Tibial artery (tissue), 4 donors: ENCODE measurements at regions of chr19 and their contacts with region 1.

Region 1: DNA sequence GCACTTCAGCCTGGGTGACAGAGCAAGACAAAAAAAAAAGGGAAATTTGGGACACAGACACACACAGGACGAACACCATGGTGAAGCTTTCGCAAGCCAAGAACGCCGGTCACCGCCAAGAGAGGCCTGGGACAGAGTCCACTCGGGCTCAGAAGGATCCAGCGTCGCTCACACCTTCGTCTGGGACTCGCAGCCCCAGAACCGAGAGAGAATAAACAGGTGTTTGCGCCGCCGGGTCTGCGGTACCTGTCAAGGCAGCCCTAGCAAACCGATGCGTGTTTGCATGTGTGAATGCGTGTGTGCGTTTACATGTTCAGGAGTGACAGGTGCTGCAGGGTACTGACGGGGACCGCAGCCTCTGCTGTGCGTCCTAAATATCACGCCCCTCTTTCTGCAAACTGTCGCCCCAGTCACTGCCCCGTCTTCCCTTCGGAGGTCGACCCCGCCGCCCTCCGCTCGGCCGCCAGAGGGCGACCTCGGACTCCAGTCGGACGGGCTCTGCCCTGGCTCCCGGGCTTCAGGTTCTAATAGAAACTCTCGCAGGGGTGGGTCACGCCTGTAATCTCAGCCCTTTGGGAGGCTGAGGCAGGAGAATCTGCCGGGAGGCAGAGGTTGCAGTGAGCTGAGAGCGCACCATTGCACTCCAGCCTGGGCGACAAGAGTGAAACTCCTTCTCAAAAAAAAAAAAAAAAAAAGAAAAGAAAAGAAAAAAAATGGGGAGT is 11.8 kb upstream of the CSNK1G2 start:
- DNase-seq: peak; percentile 76 to 83
- H3K4me3 ChIP-seq: peak overlapping the region; percentile 33 to 39
- H3K27ac ChIP-seq: no peak overlapping the region
- H3K4me1 ChIP-seq: peaks cover 0 to 16% (median 11%) of the 10 kb centered on the region in 4 donors
- H3K27me3 ChIP-seq: peaks cover 0 to 30% of the 10 kb centered on the region in 2 donors
- CTCF ChIP-seq: peak; percentile 83 to 90

Region 2: GRCh38 chr19:1987197-1988187 is 58.3 kb after region 1 on chr19:
- intact Hi-C with region 1: no loop called
- DNase-seq: no peak
- H3K4me3 ChIP-seq: no peak overlapping the region
- H3K27ac ChIP-seq: no peak overlapping the region
- H3K4me1 ChIP-seq: no peaks in the 10 kb centered on the region
- H3K27me3 ChIP-seq: no peaks in the 10 kb centered on the region
- CTCF ChIP-seq: no peak

Region 3: GRCh38 chr19:2070436-2070827 is 141.2 kb after region 1 on chr19:
- intact Hi-C with region 1: loop called (anchors 5 kb)
- DNase-seq: no peak
- H3K4me3 ChIP-seq: no peak overlapping the region
- H3K27ac ChIP-seq: no peak overlapping the region
- H3K4me1 ChIP-seq: peaks cover 0 to 8% (median 5%) of the 10 kb centered on the region in 4 donors
- H3K27me3 ChIP-seq: no peaks in the 10 kb centered on the region
- CTCF ChIP-seq: no peak